Activated CD4-positive, alpha-beta T cell treated with anti-CD3 and anti-CD28 coated beads, Interleukin-2, amount 10 ng/mL, durations not matched to agents 7 days and 5 days (primary cell): ENCODE measurements at regions of chr1 and their contacts with region 1.

Region 1: DNA sequence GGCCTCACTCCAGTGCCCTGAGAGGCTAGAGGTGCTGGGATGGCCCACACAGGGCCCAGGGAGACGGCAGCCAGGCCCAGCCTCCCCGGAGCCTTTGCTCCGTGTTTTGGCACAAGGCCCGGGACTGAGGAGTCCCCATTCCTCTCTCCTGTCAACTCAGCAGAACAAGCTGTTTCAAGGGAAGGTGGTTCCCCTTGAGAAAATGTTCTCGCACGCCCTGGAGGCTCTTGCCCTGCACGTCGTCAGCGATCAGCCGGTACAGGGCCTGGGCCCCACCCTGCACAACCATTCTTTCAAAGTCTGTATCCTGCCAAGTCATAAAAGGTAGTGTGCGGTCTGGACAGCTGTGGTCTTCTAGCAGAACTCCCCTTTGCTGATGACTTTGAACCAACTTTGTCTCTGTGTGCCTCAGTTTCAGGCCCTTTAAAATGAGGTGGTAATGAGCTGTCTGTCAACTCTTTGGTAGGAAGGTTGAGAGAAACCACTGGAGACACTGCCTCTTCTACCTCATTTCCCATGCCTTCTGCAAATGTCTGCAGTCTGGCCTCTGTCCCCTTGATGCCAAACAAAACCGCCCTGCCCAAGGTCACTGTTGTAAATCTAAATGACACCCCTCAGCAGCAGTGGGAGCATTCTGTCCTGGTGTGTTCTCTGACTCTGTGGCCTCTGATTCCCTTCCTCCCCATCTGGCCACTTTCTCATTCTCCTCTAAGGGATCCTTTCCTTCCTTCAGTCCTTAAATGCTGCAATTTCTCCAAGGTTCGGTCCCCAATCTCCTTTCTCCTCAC is 138.6 kb upstream of the JUN start:
- DNase-seq: peak; percentile 65
- H3K4me3 Mint-ChIP-seq: no peak overlapping the region
- H3K27ac Mint-ChIP-seq: peak overlapping the region; percentile 11
- H3K4me1 Mint-ChIP-seq: peaks cover 29% of the 10 kb centered on the region
- H3K27me3 Mint-ChIP-seq: no peaks in the 10 kb centered on the region

Region 2: DNA sequence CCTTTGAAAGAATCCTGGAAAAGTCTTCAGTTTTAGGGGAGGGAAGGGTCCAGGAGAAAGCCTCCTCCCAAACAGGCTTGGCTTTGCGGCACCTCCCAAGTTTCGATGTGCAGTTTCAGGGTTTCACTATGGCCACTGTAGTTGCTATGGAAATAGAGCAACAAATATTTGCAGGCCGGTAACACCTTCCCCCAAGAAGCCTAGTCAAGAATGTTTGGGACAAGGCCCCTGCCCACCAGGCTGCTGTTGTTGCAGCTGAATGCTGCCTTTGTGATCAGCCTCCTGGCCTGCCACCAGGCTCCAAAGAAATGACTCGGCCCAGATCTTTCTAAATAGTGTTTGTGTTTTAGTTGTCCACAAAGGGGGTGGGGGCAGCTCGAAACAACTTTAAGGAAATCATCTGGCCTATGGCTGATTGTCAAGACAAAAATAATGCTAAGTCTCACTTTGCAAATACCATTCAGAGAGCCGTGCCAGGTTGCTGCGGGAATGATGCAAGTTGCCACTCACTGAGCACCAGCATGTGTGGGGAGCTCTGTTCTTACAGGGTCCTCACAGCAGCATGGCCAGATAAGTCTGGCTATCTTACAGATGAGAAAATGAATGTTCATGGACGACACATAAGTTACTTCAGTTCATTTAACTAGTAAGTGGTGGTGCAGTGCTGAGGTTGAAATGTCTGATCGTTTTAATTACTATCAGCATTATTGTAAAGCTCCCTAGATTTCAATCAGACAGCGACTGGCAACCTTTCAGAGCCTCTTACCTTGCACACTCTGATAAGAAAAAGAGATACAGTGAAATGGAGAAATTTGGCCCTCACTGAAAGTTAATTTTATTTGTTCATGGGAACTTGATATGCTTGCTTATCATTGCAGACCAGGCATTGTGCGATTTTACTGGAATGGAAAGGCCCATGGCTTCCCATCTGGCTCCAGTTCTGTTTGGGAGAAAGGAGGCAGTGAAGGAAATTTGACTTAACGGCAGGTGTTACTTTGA is 47.4 kb before region 1 on chr1:
- CTCF ChIA-PET with region 1: no interaction called
- POLR2A ChIA-PET with region 1: no interaction called
- DNase-seq: no peak
- H3K4me3 Mint-ChIP-seq: no peak overlapping the region
- H3K27ac Mint-ChIP-seq: no peak overlapping the region
- H3K4me1 Mint-ChIP-seq: no peaks in the 10 kb centered on the region
- H3K27me3 Mint-ChIP-seq: peaks cover 8% of the 10 kb centered on the region

Region 3: DNA sequence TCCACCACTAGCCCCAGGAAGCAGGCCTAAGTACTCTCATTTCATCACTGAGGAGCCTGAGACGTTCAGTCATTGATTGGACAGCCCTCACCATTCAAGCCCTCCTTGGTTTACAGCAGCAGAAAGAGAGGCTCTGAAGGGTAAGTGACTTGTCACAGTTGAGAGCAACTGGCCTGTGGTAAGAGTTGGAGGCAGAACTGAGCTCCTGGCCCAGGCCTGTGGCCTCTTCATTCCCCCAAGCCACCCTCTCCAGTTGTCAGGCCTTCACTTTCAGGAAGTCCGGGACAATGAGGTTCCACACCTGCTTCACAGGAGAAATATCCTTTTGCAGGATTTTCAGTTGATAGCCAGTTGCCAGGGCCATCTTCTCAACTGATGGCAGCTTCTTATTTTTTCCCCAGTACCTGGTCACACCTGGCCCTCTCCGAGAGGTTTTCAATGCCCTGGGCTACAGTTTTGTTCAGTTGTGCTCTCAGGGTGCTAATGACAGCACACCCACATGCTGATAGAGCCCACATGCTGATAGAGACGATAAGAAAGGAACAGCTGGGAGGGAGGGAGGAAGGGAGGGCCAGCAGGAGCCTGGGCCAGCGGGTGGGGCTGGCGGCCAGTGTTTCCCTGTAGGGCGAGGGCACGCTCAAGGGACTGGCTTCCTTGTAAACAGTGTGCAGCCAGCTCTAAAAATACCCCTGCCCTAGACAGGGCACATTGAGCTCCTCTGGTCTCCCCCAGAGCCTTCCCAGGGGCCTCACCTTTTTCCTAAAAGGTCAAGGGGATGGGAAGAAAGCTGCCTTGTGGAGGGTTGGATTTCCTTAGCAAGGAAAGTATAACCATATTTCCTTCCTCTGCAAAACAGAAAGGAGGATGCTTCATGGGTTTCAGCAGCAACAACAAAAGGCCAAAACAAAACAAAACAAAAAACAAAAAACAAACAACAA is 26.0 kb before region 1 on chr1:
- CTCF ChIA-PET with region 1: no interaction called
- POLR2A ChIA-PET with region 1: no interaction called
- DNase-seq: no peak
- H3K4me3 Mint-ChIP-seq: no peak overlapping the region
- H3K27ac Mint-ChIP-seq: no peak overlapping the region
- H3K4me1 Mint-ChIP-seq: peaks cover 16% of the 10 kb centered on the region
- H3K27me3 Mint-ChIP-seq: peaks cover 5% of the 10 kb centered on the region

Region 4: GRCh38 chr1:58908561-58909560 is 13.6 kb before region 1 on chr1:
- CTCF ChIA-PET with region 1: interaction called, 19 read pairs
- POLR2A ChIA-PET with region 1: no interaction called
- DNase-seq: no peak
- H3K4me3 Mint-ChIP-seq: no peak overlapping the region
- H3K27ac Mint-ChIP-seq: no peak overlapping the region
- H3K4me1 Mint-ChIP-seq: peaks cover 11% of the 10 kb centered on the region
- H3K27me3 Mint-ChIP-seq: peaks cover 4% of the 10 kb centered on the region

Region 5: DNA sequence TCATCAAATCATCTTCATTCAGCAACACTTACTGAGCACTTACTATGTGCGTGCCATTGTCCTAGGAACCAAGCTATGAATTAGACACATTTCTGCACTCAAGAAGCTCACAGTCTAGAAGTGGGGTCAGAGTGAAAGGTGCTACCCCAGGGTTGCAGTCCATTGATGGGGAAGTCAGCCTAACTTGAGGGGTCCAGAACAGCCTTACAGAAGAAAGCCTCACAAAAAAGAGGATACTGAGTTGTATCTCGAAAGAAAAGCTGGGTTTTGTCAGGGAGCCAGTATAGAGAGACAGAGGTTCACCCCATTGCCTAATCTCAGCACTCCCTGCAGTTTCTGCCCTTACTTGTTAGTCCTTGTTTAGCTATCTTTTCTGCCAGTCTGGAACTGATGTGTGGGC is 14.5 kb after region 1 on chr1:
- CTCF ChIA-PET with region 1: interaction called, 11 read pairs
- POLR2A ChIA-PET with region 1: no interaction called
- DNase-seq: no peak
- H3K4me3 Mint-ChIP-seq: no peak overlapping the region
- H3K27ac Mint-ChIP-seq: no peak overlapping the region
- H3K4me1 Mint-ChIP-seq: peaks cover 43% of the 10 kb centered on the region
- H3K27me3 Mint-ChIP-seq: no peaks in the 10 kb centered on the region